BJ (cell line): ENCODE measurements at regions of chr3 and their contacts with region 1.

Region 1: GRCh38 chr3:184513276-184514170 is 48.1 kb upstream of the EPHB3 start:
- DNase-seq: no peak
- H3K4me3 ChIP-seq: peak overlapping the region; percentile 6
- H3K27me3 ChIP-seq: peaks cover 30% of the 10 kb centered on the region
- CTCF ChIP-seq: peak; percentile 90

Region 2: DNA sequence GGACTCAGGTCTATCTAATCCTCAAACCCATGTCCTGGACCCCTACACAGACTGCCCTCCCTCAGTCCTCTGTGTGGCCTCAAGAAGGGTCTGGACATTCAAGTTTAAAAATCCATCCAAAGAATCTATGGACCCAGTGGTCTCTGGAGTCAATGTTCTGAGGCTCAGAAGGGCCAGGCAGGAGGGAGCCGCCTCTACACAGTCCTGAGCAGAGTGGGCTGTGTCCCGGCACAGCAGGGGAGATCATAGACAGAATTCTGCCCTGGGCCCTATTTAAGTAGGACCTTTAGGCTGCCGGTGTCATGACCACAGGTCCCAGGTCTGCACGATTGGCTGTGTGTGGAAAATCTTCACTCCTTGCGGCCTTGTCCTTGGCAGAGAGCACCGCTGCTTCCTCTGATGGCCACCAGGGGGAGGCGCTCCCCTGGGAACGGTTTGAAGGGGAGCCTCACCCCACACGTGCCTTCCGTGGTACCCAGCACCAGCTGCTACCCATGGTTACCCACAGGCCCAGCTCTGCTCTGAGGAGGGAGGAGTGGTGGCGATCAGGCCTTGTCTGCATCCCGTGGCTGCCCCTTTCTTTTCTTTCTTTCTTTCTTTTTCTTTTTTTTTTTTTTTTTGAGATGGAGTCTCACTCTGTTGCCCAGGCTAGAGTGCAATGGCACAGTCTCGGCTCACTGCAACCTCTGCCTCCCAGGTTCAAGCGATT is 95.8 kb before region 1 on chr3:
- CTCF ChIA-PET with region 1: interaction called, 92 read pairs
- POLR2A ChIA-PET with region 1: no interaction called
- DNase-seq: no peak
- H3K4me3 ChIP-seq: no peak overlapping the region
- H3K27me3 ChIP-seq: no peaks in the 10 kb centered on the region
- CTCF ChIP-seq: peak; percentile 95

Region 3: DNA sequence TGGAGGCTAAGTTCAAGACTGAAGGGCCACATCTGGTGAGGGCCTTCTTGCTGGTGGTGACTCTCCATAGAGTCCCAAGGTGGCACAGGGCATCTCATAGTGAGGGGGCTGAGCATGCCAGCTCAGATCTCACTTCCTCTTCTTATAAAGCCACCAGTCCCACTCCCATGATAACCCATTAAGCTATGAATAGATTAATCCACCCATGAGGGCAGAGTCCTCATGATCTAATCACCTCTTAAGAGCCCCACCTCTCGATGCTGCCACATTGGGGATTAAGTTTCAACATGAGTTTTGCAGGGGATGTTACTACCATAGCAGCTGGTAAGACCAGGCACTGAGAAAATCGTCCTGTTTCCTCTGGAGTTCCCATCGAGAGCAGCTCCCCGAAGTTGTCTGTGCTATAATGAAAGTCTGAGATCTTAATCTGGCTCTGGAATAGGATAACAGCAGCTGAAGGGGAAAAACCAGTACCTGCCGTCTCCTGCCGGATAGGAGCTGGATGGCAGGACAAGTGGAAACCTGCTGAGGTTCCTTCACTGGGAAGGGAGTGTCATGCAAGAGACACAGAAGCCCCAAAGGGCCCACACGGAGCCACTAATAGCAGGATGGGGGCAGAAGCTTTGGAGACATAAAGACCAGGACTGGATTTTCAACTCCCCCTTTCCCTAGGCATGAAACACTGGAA is 31.4 kb before region 1 on chr3:
- CTCF ChIA-PET with region 1: interaction called, 11 read pairs
- POLR2A ChIA-PET with region 1: no interaction called
- DNase-seq: no peak
- H3K4me3 ChIP-seq: no peak overlapping the region
- H3K27me3 ChIP-seq: peaks cover 11% of the 10 kb centered on the region
- CTCF ChIP-seq: no peak

Region 4: DNA sequence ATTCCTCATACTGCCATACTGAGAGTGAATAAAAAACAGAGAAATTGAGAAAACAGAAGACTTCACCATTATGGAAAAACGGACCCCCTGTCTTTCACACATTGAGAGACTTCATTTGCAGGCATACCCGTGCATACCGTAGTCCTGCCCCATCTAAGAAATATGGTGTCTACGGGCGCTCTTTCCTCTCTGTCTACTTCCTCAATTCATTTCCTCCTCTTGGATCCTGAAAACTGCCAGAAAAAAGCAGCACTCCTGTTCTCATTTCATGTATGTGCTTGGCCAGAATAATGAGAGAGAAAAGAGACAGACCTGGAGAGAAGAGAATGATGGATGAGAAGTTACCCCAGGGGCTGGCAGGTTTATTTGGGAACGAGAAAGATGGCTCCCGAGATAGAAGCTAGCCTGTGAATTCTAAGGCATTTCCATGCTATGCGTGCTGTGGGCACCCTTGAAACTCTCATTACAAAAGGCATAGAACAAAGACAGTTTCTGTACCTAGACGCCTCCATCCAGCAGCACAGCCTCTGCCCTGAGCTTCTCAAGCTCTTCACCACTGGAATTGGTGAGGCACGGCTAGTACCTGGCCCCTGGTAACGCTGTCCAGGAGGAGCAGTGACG is 14.4 kb before region 1 on chr3:
- CTCF ChIA-PET with region 1: interaction called, 10 read pairs
- POLR2A ChIA-PET with region 1: no interaction called
- DNase-seq: no peak
- H3K4me3 ChIP-seq: no peak overlapping the region
- H3K27me3 ChIP-seq: peaks cover 6% of the 10 kb centered on the region
- CTCF ChIP-seq: no peak

Region 5: DNA sequence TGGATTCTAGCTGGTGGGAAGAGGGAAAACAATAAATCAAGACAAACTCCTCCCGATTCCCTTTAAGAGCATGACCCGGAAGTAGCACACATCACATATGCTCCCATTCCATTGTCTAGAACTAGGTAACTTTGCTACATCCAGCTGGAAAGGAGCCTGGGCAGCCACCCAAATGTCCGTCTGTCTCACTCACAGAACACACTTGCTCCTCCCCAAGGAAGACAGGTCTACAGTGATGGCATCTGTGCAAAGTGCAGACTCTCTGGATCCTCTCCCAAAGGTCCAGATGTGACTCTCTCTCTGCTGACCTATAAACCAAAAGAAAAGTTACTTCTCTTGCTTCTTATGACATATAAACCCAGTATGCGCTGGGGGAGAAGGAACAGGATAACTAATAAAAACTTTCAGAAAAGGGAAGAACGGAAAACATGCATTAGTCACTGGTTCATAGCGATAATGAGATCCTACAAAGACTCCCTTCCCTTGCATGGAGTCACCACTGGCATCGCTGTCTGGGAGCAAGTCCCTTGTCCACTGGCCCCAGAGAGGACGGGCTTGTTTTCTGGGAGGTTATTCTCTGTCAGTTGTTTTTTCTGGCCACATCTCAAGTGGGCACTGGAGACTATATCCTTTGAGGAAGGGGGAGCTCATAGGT is 18.2 kb after region 1 on chr3:
- CTCF ChIA-PET with region 1: interaction called, 53 read pairs
- POLR2A ChIA-PET with region 1: no interaction called
- DNase-seq: no peak
- H3K4me3 ChIP-seq: no peak overlapping the region
- H3K27me3 ChIP-seq: peaks cover 13% of the 10 kb centered on the region
- CTCF ChIP-seq: no peak